Sigmoid colon (tissue), 7 donors: ENCODE measurements at regions of chr9 and their contacts with region 1.

Region 1: DNA sequence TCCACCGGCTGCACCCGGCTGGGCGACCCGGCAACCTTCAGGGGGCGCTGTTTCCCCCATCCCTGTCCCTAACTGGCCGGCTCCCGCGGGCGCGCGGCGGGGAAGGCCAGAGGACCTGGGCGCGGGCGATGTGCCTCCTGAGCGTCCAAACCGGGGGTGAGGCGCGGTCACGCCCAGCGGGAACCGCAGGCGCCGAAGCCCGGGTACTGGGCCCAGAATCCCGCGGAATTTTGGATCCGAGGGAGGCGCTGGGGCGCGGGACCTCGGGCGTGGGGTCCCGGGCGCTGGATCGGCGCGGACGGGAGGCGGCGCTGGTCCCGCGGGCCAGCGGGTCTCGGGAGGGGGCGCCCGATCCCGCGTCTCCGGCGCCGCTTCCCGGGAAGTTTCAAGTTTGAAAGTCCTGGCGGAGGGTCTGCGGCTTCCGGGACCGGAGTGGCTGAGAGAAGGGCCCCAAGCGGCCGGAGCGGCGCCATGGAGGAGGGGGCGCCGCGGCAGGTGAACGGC is at the start of gene PKN3:
- DNase-seq: peak; percentile 91
- H3K4me3 ChIP-seq: peak within 1 kb of the TSS; percentile 65 to 82 (median 76)
- H3K27ac ChIP-seq: peak within 1 kb of the TSS; percentile 69 to 84 (median 76)
- H3K4me1 ChIP-seq: peaks cover 0 to 19% (median 13%) of the 10 kb centered on the region in 4 donors
- H3K27me3 ChIP-seq: no peaks in the 10 kb centered on the region
- CTCF ChIP-seq: peak; percentile 69 to 92 (median 76)
- EP300 ChIP-seq: no peak
- POLR2A ChIP-seq: no peak
- total RNA-seq, gene PKN3: 1.6 to 5.5 (median 3.1) TPM

Region 2: GRCh38 chr9:128383007-128383753 is 319.3 kb before region 1 on chr9:
- intact Hi-C with region 1: no loop called
- DNase-seq: no peak
- H3K4me3 ChIP-seq: no peak overlapping the region
- H3K27ac ChIP-seq: no peak overlapping the region
- H3K4me1 ChIP-seq: no peaks in the 10 kb centered on the region
- H3K27me3 ChIP-seq: no peaks in the 10 kb centered on the region
- CTCF ChIP-seq: no peak
- EP300 ChIP-seq: no peak
- POLR2A ChIP-seq: no peak

Region 3: DNA sequence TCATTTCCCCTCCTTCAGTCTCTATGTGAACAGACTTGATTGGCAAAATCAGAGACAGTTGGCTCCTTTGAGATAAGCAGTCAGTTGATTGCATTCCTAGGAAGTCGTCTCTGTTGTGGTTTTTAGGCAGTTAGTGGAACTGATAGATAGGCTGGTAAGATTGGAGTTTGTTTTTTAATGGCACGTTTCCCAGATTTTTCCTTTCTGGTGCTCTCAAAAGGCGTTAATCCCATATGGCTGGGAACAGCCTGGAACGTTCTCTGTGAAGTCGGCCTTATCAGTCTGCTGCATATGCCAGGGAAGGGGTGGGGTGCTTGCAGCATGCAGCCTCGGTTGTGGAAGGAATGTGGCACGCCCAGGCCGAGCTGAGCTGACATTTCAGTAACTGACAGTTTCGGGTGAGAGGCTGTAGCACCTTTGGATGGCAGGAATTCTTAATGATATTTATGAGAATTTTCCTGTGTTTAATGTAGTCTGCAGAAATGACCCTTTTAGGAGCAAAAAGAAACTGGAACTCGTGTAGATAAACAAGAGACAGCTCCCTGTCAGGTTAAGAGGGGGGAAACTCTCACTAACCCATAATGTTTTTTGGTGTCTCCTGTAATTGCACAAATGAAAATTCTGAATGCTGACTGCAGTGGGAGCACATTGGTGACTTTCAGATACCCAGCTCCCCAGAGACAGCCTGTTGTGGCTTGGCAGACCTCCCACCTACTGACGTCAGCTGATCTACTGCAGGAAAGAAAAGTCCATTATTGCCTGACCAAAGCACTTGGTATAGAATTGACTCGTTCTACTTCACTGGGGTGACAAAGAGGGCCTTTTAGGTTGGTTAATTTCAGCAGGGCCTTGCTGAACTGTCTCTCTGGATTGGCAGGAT is 143.8 kb before region 1 on chr9:
- intact Hi-C with region 1: loop called (anchors 5 kb)
- DNase-seq: peak; percentile 94
- H3K4me3 ChIP-seq: peak overlapping the region in 2 of 4 donors; percentile 1 to 18
- H3K27ac ChIP-seq: peak overlapping the region; percentile 76 to 98 (median 79)
- H3K4me1 ChIP-seq: peaks cover 0 to 71% (median 60%) of the 10 kb centered on the region in 4 donors
- H3K27me3 ChIP-seq: no peaks in the 10 kb centered on the region
- CTCF ChIP-seq: no peak
- EP300 ChIP-seq: no peak
- POLR2A ChIP-seq: no peak

Region 4: GRCh38 chr9:128587453-128587852 is 115.0 kb before region 1 on chr9:
- intact Hi-C with region 1: no loop called
- DNase-seq: no peak
- H3K4me3 ChIP-seq: no peak overlapping the region
- H3K27ac ChIP-seq: no peak overlapping the region
- H3K4me1 ChIP-seq: no peaks in the 10 kb centered on the region
- H3K27me3 ChIP-seq: no peaks in the 10 kb centered on the region
- CTCF ChIP-seq: no peak
- EP300 ChIP-seq: no peak
- POLR2A ChIP-seq: no peak

Region 5: GRCh38 chr9:128656416-128657343 is 45.8 kb before region 1 on chr9 and contains the start of gene DYNC2I2:
- intact Hi-C with region 1: loop called (anchors 5 kb)
- DNase-seq: peak; percentile 98
- H3K4me3 ChIP-seq: peak within 1 kb of the TSS; percentile 54 to 93 (median 72)
- H3K27ac ChIP-seq: peak within 1 kb of the TSS; percentile 88 to 95 (median 92)
- H3K4me1 ChIP-seq: peaks cover 0 to 12% (median 7%) of the 10 kb centered on the region in 4 donors
- H3K27me3 ChIP-seq: no peaks in the 10 kb centered on the region
- CTCF ChIP-seq: no peak
- EP300 ChIP-seq: no peak
- POLR2A ChIP-seq: peak; percentile 19 to 36
- total RNA-seq, gene DYNC2I2: 21.6 to 33.0 (median 27.0) TPM

Region 6: DNA sequence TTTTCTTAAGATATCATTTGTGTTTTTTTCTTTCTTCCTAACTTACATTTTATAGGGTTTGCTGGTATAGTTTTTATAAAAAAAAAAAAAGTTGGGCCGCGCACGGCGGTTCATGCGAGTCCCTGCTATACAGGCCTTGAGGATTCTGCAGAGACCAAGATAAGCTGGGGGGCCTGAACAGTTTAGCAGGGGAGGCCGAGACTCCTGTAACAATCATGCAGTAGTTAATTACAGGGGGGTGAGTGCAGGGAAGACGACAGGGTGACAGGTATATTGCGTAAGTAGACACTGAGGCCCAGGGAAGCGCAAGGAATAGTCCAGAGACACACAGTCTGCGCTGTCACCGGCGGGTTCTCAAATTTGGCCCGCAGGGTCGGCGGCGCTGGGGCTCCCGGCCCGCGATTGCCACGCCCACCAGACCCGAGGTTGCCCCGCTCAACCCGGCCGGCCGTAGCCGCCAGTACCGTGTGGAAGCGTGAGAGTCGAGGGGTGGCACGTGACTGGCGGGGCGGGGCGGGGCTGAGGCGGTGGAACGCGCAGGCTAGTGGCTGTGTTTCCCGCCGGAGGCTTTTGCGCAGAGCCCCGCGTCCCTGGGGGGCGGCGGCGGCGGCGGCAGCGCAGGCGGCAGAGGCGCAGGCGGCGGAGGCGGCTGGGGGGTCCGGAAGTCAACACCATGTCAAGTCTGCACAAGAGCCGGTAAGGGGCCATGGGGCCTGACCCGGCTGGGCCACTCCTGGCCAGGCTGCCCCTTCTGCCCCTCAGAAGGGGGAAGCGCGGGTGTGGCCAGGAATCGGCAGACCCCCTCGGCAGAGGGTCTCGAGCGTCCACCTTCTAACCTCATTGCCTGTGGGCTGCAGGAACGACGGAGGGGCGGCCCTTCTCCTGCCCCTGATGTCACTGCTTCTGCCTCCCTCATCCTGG is 84.4 kb after region 1 on chr9 and contains the start of gene TBC1D13:
- intact Hi-C with region 1: loop called (anchors 5 kb)
- DNase-seq: peak; percentile 95
- H3K4me3 ChIP-seq: peak within 1 kb of the TSS; percentile 80 to 98 (median 92)
- H3K27ac ChIP-seq: peak within 1 kb of the TSS; percentile 79 to 86 (median 85)
- H3K4me1 ChIP-seq: peaks cover 0 to 27% (median 19%) of the 10 kb centered on the region in 4 donors
- H3K27me3 ChIP-seq: no peaks in the 10 kb centered on the region
- CTCF ChIP-seq: no peak
- EP300 ChIP-seq: peak in 2 of 4 donors; percentile 12 to 33
- POLR2A ChIP-seq: peak; percentile 18 to 31
- total RNA-seq, gene TBC1D13: 13.0 to 25.8 (median 17.8) TPM